ENCODE measurements at regions of chr1 and their contacts with region 1.

Region 1: GRCh38 chr1:198638894-198639635 is at the start of gene PTPRC:
- DNase-seq: peak; percentile 88
- H3K4me3 ChIP-seq: peak within 1 kb of the TSS; percentile 87
- H3K27ac ChIP-seq: peak within 1 kb of the TSS; percentile 96
- H3K4me1 ChIP-seq: peaks cover 63% of the 10 kb centered on the region
- CTCF ChIP-seq: no peak
- total RNA-seq, gene PTPRC: 161 and 177 TPM in 2 replicates

Region 2: DNA sequence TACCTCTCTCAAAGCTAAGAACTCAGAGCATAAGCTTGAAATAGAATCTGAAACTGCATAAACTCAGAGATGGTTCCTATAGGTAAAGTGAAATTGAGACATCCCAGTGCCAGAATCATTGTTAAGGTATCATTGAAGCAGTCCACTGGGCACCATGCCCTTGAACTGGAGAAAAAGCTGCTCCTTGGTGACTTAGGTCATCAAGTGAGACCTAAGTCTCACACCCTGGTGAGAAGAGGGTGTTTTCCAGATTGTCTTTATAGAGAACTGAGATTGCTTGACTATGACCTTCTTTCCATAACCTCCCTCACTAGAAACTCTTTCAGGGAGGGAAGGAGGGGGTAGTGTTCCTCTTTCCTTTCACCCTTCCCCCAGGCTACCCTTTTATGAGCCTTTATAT is 89.2 kb before region 1 on chr1:
- CTCF ChIA-PET with region 1: no interaction called
- POLR2A ChIA-PET with region 1: no interaction called
- intact Hi-C with region 1: no loop called
- DNase-seq: no peak
- H3K4me3 ChIP-seq: no peak overlapping the region
- H3K27ac ChIP-seq: no peak overlapping the region
- H3K4me1 ChIP-seq: peaks cover 25% of the 10 kb centered on the region
- CTCF ChIP-seq: no peak

Region 3: GRCh38 chr1:198651650-198652400 is 12.8 kb after region 1 on chr1:
- CTCF ChIA-PET with region 1: no interaction called
- POLR2A ChIA-PET with region 1: interaction called, 32 read pairs
- intact Hi-C with region 1: loop called (anchors 2 kb)
- DNase-seq: peak; percentile 65
- H3K4me3 ChIP-seq: peak overlapping the region; percentile 62
- H3K27ac ChIP-seq: peak overlapping the region; percentile 87
- H3K4me1 ChIP-seq: peaks cover 98% of the 10 kb centered on the region
- CTCF ChIP-seq: no peak

Region 4: GRCh38 chr1:198657550-198658064 is 18.5 kb after region 1 on chr1:
- CTCF ChIA-PET with region 1: no interaction called
- POLR2A ChIA-PET with region 1: interaction called, 32 read pairs
- intact Hi-C with region 1: loop called (anchors 2 kb)
- DNase-seq: peak; percentile 73
- H3K4me3 ChIP-seq: peak overlapping the region; percentile 58
- H3K27ac ChIP-seq: peak overlapping the region; percentile 86
- H3K4me1 ChIP-seq: peaks cover 84% of the 10 kb centered on the region
- CTCF ChIP-seq: no peak

Region 5: DNA sequence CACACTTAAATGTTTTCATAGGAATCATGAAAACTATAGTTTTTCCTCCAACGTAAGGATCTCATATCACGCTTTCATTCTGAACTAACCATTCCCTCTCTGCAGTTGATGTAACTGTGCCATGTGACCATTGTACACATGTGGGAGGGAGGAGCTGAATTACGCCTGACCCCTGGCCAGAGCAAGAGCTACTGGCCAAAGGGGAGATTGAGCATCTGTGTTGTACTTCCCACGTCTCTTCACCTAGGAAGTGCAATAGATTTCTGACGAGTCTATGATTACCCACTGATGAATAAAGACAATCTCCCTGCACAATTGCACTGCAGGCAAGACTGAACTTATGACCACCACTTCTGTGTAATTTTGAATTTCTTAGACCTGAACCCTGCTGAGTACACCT is 23.8 kb after region 1 on chr1:
- CTCF ChIA-PET with region 1: no interaction called
- POLR2A ChIA-PET with region 1: interaction called, 10 read pairs
- intact Hi-C with region 1: no loop called
- DNase-seq: no peak
- H3K4me3 ChIP-seq: no peak overlapping the region
- H3K27ac ChIP-seq: peak overlapping the region; percentile 46
- H3K4me1 ChIP-seq: peaks cover 74% of the 10 kb centered on the region
- CTCF ChIP-seq: no peak